Activated CD8-positive, alpha-beta T cell treated with anti-CD3 and anti-CD28 coated beads for 36 hours (primary cell): ENCODE measurements at regions of chr21 and their contacts with region 1.

Region 1: DNA sequence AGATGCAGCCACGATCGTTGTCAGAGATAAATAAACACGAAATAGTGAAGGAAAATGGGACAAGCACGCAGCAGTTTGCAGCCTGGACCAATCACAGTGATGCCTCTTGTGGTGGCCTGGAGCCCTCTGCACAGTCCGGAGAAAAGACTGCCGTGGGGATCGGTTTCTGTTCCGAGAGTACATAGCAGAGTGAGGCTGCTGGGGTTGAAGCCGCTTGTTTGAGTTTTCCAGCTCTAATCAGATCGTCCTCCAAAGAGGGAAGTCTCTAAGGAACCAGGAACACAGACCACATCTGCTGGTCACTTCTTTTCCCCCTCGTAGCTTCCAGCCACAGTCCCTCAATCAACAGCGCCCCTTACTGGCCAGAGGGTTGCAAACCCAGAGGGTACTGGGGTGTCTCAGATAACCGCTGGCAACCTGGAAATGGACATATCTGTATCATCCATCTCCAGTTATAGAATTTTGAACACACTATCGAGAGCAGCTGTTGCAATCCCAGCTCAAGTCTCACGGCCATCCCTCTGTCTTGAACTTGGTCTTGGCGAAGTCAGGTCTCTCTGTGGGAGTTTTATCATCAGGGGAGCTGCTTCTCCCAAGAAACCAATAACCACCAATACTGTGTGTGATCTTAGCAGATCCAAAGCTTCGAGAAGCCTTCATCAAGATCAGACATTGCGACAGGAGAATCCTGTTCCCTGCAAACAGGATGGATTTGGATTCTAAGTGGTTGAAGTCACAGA is 57.4 kb downstream of the OLIG1 start:
- DNase-seq: peak; percentile 77
- ATAC-seq: peak; percentile 86
- H3K4me3 Mint-ChIP-seq: peak overlapping the region; percentile 60
- H3K27ac Mint-ChIP-seq: no peak overlapping the region
- H3K4me1 Mint-ChIP-seq: peaks cover 4% of the 10 kb centered on the region
- H3K27me3 Mint-ChIP-seq: peaks cover 23% of the 10 kb centered on the region
- CTCF ChIP-seq: peak; percentile 83

Region 2: GRCh38 chr21:32834916-32835235 is 292.4 kb before region 1 on chr21:
- CTCF ChIA-PET with region 1: interaction called, 16 read pairs
- POLR2A ChIA-PET with region 1: interaction called, 3 read pairs
- intact Hi-C with region 1: loop called (anchors 10 kb)
- DNase-seq: no peak
- ATAC-seq: no peak
- H3K4me3 Mint-ChIP-seq: no peak overlapping the region
- H3K27ac Mint-ChIP-seq: no peak overlapping the region
- H3K4me1 Mint-ChIP-seq: no peaks in the 10 kb centered on the region
- H3K27me3 Mint-ChIP-seq: peaks cover 1% of the 10 kb centered on the region
- CTCF ChIP-seq: no peak

Region 3: GRCh38 chr21:32994305-32994704 is 133.0 kb before region 1 on chr21:
- CTCF ChIA-PET with region 1: interaction called, 13 read pairs
- POLR2A ChIA-PET with region 1: no interaction called
- intact Hi-C with region 1: loop called (anchors 10 kb)
- DNase-seq: no peak
- ATAC-seq: no peak
- H3K4me3 Mint-ChIP-seq: no peak overlapping the region
- H3K27ac Mint-ChIP-seq: no peak overlapping the region
- H3K4me1 Mint-ChIP-seq: no peaks in the 10 kb centered on the region
- H3K27me3 Mint-ChIP-seq: peaks cover 12% of the 10 kb centered on the region
- CTCF ChIP-seq: peak; percentile 57

Region 4: GRCh38 chr21:33025489-33026442 is 101.6 kb before region 1 on chr21 and contains the start of gene OLIG2:
- CTCF ChIA-PET with region 1: interaction called, 4 read pairs
- POLR2A ChIA-PET with region 1: no interaction called
- intact Hi-C with region 1: loop called (anchors 10 kb)
- DNase-seq: peak; percentile 26
- ATAC-seq: peak; percentile 45
- H3K4me3 Mint-ChIP-seq: peak within 1 kb of the TSS; percentile 40
- H3K27ac Mint-ChIP-seq: no peak within 1 kb of the TSS
- H3K4me1 Mint-ChIP-seq: peaks cover 38% of the 10 kb centered on the region
- H3K27me3 Mint-ChIP-seq: peaks cover 86% of the 10 kb centered on the region
- CTCF ChIP-seq: no peak
- total RNA-seq, gene OLIG2: not detected

Region 5: GRCh38 chr21:33089398-33090119 is 37.8 kb before region 1 on chr21:
- CTCF ChIA-PET with region 1: interaction called, 10 read pairs
- POLR2A ChIA-PET with region 1: no interaction called
- intact Hi-C with region 1: no loop called
- DNase-seq: no peak
- ATAC-seq: no peak
- H3K4me3 Mint-ChIP-seq: no peak overlapping the region
- H3K27ac Mint-ChIP-seq: no peak overlapping the region
- H3K4me1 Mint-ChIP-seq: no peaks in the 10 kb centered on the region
- H3K27me3 Mint-ChIP-seq: peaks cover 4% of the 10 kb centered on the region
- CTCF ChIP-seq: no peak

Region 6: GRCh38 chr21:33288967-33289819 is 161.9 kb after region 1 on chr21:
- CTCF ChIA-PET with region 1: no interaction called
- POLR2A ChIA-PET with region 1: no interaction called
- intact Hi-C with region 1: no loop called
- DNase-seq: no peak
- ATAC-seq: no peak
- H3K4me3 Mint-ChIP-seq: no peak overlapping the region
- H3K27ac Mint-ChIP-seq: no peak overlapping the region
- H3K4me1 Mint-ChIP-seq: peaks cover 17% of the 10 kb centered on the region
- H3K27me3 Mint-ChIP-seq: no peaks in the 10 kb centered on the region
- CTCF ChIP-seq: no peak